ENCODE measurements at regions of chr22 and their contacts with region 1.

Region 1: DNA sequence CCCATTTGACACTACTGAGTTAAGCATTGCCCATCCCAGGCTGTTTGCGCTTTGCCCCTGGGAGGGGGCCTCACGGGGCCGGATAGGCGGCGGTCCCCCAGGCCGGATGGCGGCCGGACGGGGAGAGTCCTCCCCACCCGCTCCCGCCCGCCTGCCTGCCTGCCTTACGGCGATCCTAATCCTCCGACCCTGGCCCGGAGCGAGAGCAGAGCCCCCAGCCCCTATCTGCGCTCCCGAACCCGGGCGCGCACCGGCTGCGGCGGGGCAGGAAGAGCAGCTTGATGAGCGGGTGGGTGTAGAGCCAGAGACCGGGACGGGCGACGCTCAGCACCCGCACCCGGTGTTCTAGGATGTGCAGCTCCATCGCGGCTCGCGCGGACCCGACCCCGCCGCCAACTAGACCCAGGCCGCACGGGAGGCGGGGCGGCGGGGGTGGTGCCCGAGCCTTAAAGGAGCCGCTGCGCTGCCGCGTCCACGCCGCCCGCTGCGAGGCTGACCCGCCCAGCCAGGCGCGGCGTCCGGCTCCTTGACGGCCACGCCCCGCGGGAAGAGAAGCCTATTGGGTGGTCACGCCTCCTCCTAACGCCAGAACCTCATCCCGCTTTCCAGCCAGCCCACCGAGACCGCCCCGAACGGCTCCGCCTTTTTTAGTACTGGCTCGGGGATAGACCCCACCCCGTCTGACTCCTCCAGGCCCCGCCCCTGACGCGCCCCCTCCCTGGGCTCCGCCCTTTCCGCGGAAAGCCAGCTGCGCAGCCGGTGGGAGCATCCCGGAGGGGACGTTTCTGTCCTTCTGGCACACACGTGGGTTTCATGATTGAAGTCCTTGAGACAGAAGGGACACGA is at the start of gene CASTOR1:
- DNase-seq: peak; percentile 98
- H3K4me3 Mint-ChIP-seq: peak within 1 kb of the TSS; percentile 77
- H3K27ac Mint-ChIP-seq: peak within 1 kb of the TSS; percentile 62
- H3K4me1 Mint-ChIP-seq: peaks cover 6% of the 10 kb centered on the region
- H3K27me3 Mint-ChIP-seq: no peaks in the 10 kb centered on the region
- CTCF ChIP-seq: no peak
- total RNA-seq, gene CASTOR1: 1.2 and 4.8 TPM in 2 replicates

Region 2: DNA sequence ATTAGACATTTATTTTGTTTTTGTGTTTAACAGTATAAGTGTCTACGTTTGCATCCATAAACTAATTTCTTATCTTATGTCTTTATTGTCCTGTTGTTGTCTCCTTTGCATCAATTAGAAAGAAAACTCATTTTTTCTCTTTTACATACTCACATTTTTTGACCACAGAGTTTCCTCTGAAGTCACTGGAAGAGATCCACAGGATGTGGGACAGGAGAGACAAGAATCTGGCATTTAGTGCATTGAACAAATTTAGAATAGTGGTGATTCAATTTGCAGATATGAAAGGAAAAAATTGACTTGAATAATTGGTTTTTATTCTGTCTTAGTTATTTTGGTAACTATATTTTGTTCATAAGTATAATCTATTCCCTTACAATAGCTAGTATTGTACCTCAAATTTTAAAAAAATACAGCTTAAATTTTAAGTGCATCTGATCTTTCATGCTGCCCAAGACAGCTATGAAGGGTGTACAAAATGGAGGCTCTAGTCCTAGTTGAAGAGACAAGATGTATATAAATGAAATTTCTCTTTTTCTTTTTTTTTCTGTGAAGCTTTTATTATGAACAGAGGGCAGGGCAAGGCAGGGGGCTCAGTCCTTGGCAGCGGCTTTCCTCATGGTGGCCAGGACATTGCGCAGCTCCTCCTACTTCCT is 184.7 kb before region 1 on chr22:
- CTCF ChIA-PET with region 1: interaction called, 21 read pairs
- POLR2A ChIA-PET with region 1: interaction called, 3 read pairs
- intact Hi-C with region 1: no loop called
- DNase-seq: no peak
- H3K4me3 Mint-ChIP-seq: no peak overlapping the region
- H3K27ac Mint-ChIP-seq: no peak overlapping the region
- H3K4me1 Mint-ChIP-seq: peaks cover 6% of the 10 kb centered on the region
- H3K27me3 Mint-ChIP-seq: no peaks in the 10 kb centered on the region
- CTCF ChIP-seq: no peak

Region 3: GRCh38 chr22:30279046-30279788 is 10.1 kb before region 1 on chr22:
- CTCF ChIA-PET with region 1: interaction called, 12 read pairs
- POLR2A ChIA-PET with region 1: interaction called, 5 read pairs
- intact Hi-C with region 1: no loop called
- DNase-seq: peak; percentile 83
- H3K4me3 Mint-ChIP-seq: no peak overlapping the region
- H3K27ac Mint-ChIP-seq: no peak overlapping the region
- H3K4me1 Mint-ChIP-seq: peaks cover 26% of the 10 kb centered on the region
- H3K27me3 Mint-ChIP-seq: no peaks in the 10 kb centered on the region
- CTCF ChIP-seq: no peak

Region 4: GRCh38 chr22:30326706-30327362 is 37.5 kb after region 1 on chr22 and contains the start of gene TBC1D10A:
- CTCF ChIA-PET with region 1: interaction called, 43 read pairs
- POLR2A ChIA-PET with region 1: interaction called, 109 read pairs
- intact Hi-C with region 1: loop called (anchors 1 kb)
- DNase-seq: peak; percentile 92
- H3K4me3 Mint-ChIP-seq: peak within 1 kb of the TSS; percentile 71
- H3K27ac Mint-ChIP-seq: peak within 1 kb of the TSS; percentile 86
- H3K4me1 Mint-ChIP-seq: peaks cover 23% of the 10 kb centered on the region
- H3K27me3 Mint-ChIP-seq: no peaks in the 10 kb centered on the region
- CTCF ChIP-seq: no peak
- total RNA-seq, gene TBC1D10A: 11.1 and 13.1 TPM in 2 replicates

Region 5: GRCh38 chr22:30373331-30374325 is 84.3 kb after region 1 on chr22:
- CTCF ChIA-PET with region 1: interaction called, 15 read pairs
- POLR2A ChIA-PET with region 1: interaction called, 4 read pairs
- intact Hi-C with region 1: no loop called
- DNase-seq: no peak
- H3K4me3 Mint-ChIP-seq: no peak overlapping the region
- H3K27ac Mint-ChIP-seq: no peak overlapping the region
- H3K4me1 Mint-ChIP-seq: no peaks in the 10 kb centered on the region
- H3K27me3 Mint-ChIP-seq: no peaks in the 10 kb centered on the region
- CTCF ChIP-seq: no peak

Region 6: GRCh38 chr22:30396871-30397655 is 107.7 kb after region 1 on chr22 and contains the start of gene SEC14L2:
- CTCF ChIA-PET with region 1: interaction called, 48 read pairs
- POLR2A ChIA-PET with region 1: interaction called, 10 read pairs
- intact Hi-C with region 1: no loop called
- DNase-seq: peak; percentile 72
- H3K4me3 Mint-ChIP-seq: peak within 1 kb of the TSS; percentile 85
- H3K27ac Mint-ChIP-seq: peak within 1 kb of the TSS; percentile 81
- H3K4me1 Mint-ChIP-seq: peaks cover 29% of the 10 kb centered on the region
- H3K27me3 Mint-ChIP-seq: no peaks in the 10 kb centered on the region
- CTCF ChIP-seq: no peak
- total RNA-seq, gene SEC14L2: 20.0 and 29.1 TPM in 2 replicates

Region 7: GRCh38 chr22:31199183-31199582 is 909.8 kb after region 1 on chr22:
- CTCF ChIA-PET with region 1: no interaction called
- POLR2A ChIA-PET with region 1: no interaction called
- intact Hi-C with region 1: no loop called
- DNase-seq: no peak
- H3K4me3 Mint-ChIP-seq: no peak overlapping the region
- H3K27ac Mint-ChIP-seq: no peak overlapping the region
- H3K4me1 Mint-ChIP-seq: no peaks in the 10 kb centered on the region
- H3K27me3 Mint-ChIP-seq: no peaks in the 10 kb centered on the region
- CTCF ChIP-seq: no peak

Measured in MCF 10A (cell line).